ENCODE measurements at regions of chr15 and their contacts with region 1.

Region 1: DNA sequence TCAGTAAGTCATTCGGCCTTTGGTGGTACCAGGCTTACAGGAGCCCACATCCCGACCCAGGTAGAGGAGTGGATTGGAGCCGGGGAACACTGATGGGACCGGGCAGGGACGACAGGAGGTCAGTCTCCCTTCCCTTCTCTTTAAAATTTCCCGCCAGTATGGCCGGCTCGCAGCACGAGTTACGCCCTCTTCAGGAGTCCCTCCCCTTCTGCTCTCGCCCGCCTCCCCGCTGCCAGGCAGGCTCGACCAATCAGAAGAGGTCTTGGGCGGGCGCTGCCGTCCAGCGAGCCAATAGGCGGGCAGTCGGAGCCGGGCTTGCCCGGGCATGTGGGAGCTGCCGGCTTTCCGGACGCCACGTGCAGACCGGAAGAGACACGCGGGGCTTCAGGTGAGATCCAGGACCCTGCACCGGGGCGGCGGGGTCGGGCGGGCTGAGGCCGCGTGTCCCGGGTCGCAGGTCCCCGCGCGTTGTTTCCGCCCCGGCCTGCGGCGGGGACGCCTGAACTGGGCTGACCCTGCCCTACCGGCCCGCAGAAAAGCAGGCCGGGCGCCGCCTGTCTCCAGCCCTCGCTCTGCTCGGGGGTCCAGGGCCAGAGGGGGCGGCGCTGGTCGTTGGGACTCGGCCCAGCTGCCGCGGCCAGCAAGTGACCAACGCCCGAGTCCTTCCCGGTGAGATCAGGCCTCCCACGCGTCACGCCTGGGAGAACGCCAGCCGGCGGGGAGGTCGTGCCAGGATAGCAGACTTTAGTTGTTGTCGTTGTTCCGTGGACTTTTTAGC is at the start of gene AEN:
- DNase-seq: peak; percentile 86 to 93
- H3K4me3 ChIP-seq: peak within 1 kb of the TSS; percentile 84
- H3K27ac ChIP-seq: peak within 1 kb of the TSS; percentile 44
- H3K4me1 ChIP-seq: peaks cover 19% of the 10 kb centered on the region
- H3K27me3 ChIP-seq: no peaks in the 10 kb centered on the region
- CTCF ChIP-seq: no peak
- total RNA-seq, gene AEN: 6.7 and 7.8 TPM in 2 replicates

Region 2: GRCh38 chr15:88546248-88547129 is 74.7 kb before region 1 on chr15 and contains the start of gene DET1:
- CTCF ChIA-PET with region 1: no interaction called
- POLR2A ChIA-PET with region 1: no interaction called
- intact Hi-C with region 1: loop called (anchors 2 kb)
- DNase-seq: peak; percentile 87 to 91
- H3K4me3 ChIP-seq: peak within 1 kb of the TSS; percentile 76
- H3K27ac ChIP-seq: no peak within 1 kb of the TSS; the same call in 1 of the 2 replicates
- H3K4me1 ChIP-seq: peaks cover 6% of the 10 kb centered on the region; the same call in 1 of the 2 replicates
- H3K27me3 ChIP-seq: no peaks in the 10 kb centered on the region
- CTCF ChIP-seq: peak; percentile 68; the same call in 1 of the 2 replicates
- total RNA-seq, gene DET1: 2.9 and 3.7 TPM in 2 replicates

Region 3: DNA sequence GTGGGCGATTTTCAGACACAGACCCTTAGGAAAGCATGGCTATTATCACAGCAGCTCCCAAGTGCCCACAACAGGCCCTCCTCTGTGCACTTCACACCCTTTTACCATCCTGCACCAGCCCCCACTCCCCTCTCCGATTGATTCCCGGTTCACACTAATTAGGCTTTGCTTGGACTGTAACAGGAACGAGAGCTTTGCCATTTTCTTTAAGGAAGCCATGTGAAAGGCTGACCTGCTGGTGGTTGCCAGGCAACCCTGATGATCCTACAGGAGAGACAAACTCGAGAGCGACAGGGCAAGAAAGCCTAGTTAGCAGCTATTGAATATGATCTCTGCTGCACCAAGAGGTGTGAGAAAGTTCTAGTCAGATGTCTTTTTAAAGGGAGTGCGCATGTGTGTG is 46.5 kb before region 1 on chr15:
- CTCF ChIA-PET with region 1: no interaction called
- POLR2A ChIA-PET with region 1: no interaction called
- intact Hi-C with region 1: no loop called
- DNase-seq: no peak
- H3K4me3 ChIP-seq: no peak overlapping the region
- H3K27ac ChIP-seq: no peak overlapping the region
- H3K4me1 ChIP-seq: no peaks in the 10 kb centered on the region
- H3K27me3 ChIP-seq: peaks cover 76% of the 10 kb centered on the region
- CTCF ChIP-seq: no peak

Region 4: DNA sequence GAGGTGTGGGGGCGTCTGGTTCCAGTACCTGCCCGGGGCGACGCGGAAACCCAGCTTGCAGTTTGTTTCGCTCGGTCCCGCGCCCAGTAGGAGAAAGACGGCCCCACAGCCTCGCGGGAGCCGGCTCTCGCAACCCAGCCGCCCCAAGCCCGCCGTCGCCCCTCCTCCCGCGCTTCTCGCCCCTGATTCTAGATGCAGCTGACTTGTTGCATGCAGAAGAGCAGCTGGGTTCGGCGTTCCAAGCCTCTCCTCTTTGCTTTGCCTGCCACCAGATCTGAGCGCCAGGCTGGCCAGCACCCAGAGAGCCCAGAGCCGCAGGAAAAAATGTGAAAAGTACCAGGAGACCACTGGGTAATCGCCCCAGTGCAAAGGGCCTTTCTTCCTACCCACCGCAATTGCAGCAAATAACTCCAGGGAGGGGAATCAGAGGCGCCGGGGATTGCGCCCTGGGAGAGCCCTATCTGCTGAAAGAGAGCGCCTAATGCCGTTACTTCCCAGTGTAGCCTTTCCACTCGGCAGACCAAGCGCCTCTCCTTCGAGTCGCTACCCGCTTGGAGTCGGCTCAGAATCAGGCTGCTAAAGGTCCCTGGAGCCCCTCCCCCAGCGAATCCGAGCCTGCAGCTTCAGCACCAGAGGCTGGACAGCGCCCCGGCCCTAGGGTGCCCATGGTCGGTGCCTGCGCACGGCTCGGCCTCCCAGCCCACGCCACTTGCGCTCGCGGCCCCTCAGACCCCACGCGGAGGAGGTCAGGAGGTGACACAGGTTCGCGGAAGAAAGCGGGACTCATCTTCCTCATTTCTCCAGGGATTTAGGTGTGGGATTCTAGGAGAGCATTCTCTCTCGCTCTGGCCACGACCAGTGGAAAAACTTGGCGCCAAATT is 15.8 kb before region 1 on chr15:
- CTCF ChIA-PET with region 1: no interaction called
- POLR2A ChIA-PET with region 1: no interaction called
- intact Hi-C with region 1: no loop called
- DNase-seq: peak in 1 of 2 experiments; percentile 15
- H3K4me3 ChIP-seq: no peak overlapping the region
- H3K27ac ChIP-seq: no peak overlapping the region
- H3K4me1 ChIP-seq: no peaks in the 10 kb centered on the region
- H3K27me3 ChIP-seq: peaks cover 61% of the 10 kb centered on the region
- CTCF ChIP-seq: no peak

Region 5: DNA sequence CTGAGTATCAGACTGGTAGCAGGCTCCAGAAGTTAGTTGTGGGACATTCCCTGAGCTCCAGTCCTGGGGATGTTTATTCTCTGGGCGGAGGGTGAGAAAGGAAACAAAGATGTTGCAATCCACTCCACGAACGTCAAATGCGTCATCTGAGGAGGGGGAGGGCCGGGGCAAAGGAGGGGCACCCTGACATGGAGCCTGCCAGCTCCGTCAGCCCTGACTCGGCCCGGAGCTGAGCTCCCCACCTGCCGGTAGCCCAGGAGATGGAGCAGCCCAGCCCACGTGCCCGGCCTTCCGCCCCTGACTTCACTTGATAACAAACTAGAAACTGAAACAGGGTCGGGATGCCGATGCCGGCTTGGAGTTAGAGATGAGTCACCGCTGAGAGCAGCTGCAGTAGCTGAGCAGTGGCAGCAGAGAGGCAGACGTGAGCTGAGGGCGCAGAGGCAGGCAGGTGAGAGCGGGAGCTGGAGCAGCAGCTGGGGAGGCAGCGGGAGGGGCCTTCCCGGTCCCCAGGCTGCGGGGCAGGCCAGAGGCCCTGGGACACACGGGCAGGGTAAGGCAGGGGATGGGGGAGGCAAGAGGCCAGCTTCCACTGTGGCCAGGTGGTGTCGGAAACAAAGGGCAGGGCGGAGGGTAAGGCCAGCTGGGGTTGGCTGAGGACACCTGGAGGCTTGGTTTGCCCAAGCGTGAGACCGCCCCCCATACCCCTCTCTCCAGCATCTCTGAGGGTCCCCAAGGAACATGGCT is 17.6 kb after region 1 on chr15 and contains the start of gene ISG20:
- CTCF ChIA-PET with region 1: interaction called, 7 read pairs
- POLR2A ChIA-PET with region 1: interaction called, 3 read pairs
- intact Hi-C with region 1: loop called (anchors 1 kb)
- DNase-seq: peak; percentile 94
- H3K4me3 ChIP-seq: peak within 1 kb of the TSS; percentile 33; the same call in 1 of the 2 replicates
- H3K27ac ChIP-seq: peak within 1 kb of the TSS; percentile 79
- H3K4me1 ChIP-seq: peaks cover 29% of the 10 kb centered on the region
- H3K27me3 ChIP-seq: no peaks in the 10 kb centered on the region
- CTCF ChIP-seq: no peak; the same call in 1 of the 2 replicates
- total RNA-seq, gene ISG20: 2.5 and 5.2 TPM in 2 replicates

Region 6: GRCh38 chr15:88701561-88702095 is 80.4 kb after region 1 on chr15:
- CTCF ChIA-PET with region 1: no interaction called
- POLR2A ChIA-PET with region 1: no interaction called
- intact Hi-C with region 1: loop called (anchors 5 kb)
- DNase-seq: peak in 1 of 2 experiments; percentile 14
- H3K4me3 ChIP-seq: no peak overlapping the region
- H3K27ac ChIP-seq: no peak overlapping the region
- H3K4me1 ChIP-seq: no peaks in the 10 kb centered on the region
- H3K27me3 ChIP-seq: peaks cover 71% of the 10 kb centered on the region
- CTCF ChIP-seq: peak; percentile 59